ENCODE measurements at regions of chr7 and their contacts with region 1.

Region 1: DNA sequence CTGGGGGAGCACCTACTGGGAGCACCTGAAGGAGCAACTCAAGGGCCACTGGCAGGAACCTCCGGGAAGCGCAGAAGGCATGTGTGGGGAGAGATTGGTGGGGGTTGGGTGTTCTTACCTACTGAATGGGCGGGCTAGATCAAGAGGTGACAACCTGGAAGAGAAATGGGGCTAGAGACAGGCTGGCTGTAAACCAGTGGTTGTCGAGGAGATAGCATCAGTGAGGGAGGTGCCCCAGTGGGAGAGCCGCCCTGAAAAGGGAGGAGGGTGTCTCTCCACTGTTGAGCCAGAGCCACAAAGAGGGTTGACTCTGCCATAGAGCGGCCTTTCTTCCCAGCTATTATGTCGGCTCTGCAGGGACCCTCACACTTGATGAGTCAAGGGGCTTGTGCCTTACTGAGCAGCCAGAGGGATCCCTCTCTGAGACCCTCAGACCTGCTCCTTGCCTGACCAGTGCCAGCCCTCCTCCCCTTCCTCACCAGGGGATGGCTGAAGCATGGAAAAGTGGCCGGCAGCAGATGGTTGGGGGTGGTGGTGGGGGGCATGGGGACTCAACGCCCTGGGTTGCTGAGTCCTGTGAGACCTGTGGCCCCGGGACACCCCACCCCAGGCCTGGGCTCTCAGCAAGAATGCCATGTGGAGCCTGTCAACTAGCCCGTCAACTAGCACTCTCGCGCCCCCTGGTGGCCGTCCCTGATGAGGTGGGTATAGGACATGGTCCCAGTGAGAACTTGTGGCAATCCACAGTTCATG is 36.5 kb upstream of the PURB start:
- DNase-seq: peak; percentile 97
- ATAC-seq: peak; percentile 90

Region 2: GRCh38 chr7:44587843-44588711 is 333.7 kb before region 1 on chr7:
- intact Hi-C with region 1: loop called (anchors 2 kb)
- DNase-seq: no peak
- ATAC-seq: peak; percentile 51

Region 3: DNA sequence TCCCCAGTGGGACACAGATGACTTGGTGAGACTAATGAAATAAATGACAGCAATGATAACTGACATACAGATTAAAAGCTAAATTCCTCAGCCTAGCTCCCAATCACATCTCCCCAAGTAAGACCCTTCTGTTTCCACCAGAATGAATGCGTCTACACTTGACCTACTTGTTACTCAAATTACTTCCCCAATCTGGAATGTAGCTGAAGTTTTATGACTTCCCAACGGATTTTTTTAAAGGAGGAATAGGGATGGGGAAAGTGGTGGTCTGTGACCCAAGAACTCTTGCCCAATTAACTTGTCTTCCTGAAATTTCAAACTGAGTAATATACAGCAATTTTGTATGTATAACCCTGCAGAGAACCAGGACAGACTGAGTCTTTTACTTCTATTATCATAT is 83.0 kb before region 1 on chr7:
- intact Hi-C with region 1: no loop called
- DNase-seq: no peak
- ATAC-seq: no peak

Region 4: DNA sequence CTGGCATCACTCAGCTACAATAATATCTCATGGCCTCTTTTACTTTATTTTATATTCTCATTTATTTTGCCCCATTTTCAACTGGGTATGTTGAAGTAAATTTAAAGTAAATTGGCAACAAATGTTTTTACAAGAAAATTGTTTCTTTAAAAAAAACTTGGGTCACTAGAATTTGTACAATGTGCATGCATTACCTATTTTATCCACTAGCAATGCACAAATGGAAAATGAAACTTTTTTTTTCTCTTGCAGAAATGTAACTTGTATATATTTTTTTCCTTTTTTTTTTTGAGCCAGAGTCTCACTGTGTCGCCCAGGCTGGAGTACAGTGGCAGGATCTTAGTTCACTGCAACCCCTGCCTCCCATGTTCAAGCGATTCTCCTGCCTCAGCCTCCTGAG is 63.6 kb before region 1 on chr7:
- intact Hi-C with region 1: loop called (anchors 1 kb)
- DNase-seq: no peak
- ATAC-seq: no peak

Region 5: DNA sequence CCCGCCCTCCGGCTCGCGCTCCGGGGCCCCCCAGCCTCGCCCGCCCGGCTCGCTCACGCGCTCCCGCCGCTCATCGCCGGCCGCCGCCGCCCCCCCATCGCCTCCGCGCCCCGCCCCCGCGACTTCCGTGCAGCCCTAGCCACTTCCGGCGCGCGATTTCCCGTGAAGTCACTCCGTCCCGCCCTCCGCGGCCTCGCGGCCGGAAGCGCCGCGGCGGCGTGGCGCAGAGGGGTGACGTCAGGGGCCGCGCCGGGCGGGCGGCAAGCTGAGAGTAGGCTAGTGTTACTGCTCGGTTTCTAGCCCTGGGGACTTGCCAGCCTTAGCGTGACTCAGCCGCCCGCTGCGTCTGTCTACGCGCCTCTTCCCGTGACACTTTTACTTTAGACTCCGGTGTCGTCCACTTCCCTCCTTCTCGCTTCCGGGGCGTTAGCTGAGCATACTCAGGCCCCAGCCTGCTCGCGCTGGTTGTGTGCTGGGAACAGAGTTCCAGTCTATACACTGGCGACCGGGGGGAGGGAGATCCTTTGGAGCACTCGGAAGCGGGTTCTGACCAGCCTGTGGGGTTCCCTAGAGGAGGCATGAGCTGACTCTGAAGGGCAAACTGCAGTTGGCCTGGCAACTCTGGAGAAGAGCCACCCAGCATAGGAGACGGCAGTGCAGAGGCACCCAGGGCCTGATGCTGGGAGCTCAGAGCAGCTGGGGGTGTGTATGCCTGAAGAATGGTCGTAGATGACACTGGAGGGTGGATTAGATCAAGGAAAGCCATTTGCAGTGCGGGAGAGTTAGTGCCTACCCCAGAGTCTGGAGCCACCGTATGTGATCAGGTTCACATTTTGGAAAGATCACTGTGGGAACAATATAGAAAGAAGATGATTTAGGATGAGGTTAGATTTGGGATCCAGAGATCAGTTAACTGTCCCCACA is 36.1 kb before region 1 on chr7 and contains the start of gene PURB:
- intact Hi-C with region 1: loop called (anchors 5 kb)
- DNase-seq: peak; percentile 98
- ATAC-seq: peak; percentile 98
- total RNA-seq, gene PURB: 13.8 TPM